ENCODE measurements at regions of chr1 and their contacts with region 1.

Region 1: GRCh38 chr1:180154325-180155181 is at the start of gene QSOX1:
- DNase-seq: peak; percentile 91 to 100 (median 99)
- ATAC-seq: peak; percentile 91
- H3K4me3 ChIP-seq: peak within 1 kb of the TSS; percentile 77
- H3K27ac ChIP-seq: peak within 1 kb of the TSS; percentile 77
- H3K4me1 ChIP-seq: peaks cover 33 to 37% of the 10 kb centered on the region in 2 experiments
- H3K27me3 ChIP-seq: no peaks in the 10 kb centered on the region
- CTCF ChIP-seq: peak in 2 of 3 experiments; percentile 10 to 48; a peak in 1 of 6 replicates
- EP300 ChIP-seq: peak; percentile 63; the same call in 1 of the 2 replicates
- POLR2A ChIP-seq: peak; percentile 85
- RAD21 ChIP-seq: no peak
- polyA plus RNA-seq, gene QSOX1: 4.0 to 4.6 TPM

Region 2: DNA sequence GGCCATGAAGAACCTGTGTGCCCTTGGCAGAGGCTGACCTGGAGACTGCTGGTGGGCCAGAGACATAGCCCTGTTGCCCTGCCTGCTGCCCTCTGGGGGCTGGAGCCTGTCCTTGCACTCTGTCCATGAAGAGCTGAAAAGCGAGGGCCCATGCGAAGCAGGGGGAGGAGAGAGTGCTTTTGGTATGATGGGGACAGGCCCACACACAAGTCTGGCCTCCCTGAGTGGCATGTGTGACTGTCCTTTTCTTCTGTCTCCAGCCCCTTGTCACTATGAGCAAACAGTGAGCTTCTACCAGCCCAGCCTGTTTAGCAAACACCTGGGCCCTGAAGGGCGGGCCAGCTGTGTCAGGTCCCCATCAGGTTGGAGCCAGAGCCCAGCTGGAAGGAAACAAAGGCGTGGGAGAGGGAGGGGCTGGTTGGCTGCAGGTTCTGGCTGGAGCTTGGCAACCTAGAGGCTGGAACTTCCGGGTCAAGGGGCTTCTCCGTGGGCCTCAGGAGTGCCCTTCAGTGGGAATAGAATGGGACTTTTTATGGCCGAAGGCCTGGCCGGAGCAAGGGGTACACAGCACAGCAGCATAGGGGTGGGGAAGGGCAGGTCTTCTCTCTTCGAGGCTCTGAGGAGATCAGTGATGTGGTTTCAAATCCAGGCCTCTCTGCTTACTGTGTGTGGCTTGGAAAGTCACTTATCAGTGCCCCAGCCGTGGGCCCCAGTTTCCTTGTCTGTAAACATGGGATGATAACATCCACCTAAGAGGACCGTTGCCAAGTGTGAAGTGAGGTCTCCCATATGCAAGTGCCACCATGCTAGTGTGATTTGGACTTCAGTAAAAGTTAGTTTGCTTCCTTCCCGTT is 14.5 kb after region 1 on chr1:
- CTCF ChIA-PET with region 1: no interaction called
- POLR2A ChIA-PET with region 1: interaction called, 41 read pairs
- in situ Hi-C with region 1: no loop called
- intact Hi-C with region 1: no loop called
- DNase-seq: peak; percentile 70 to 78 (median 75)
- ATAC-seq: peak; percentile 93
- H3K4me3 ChIP-seq: no peak overlapping the region
- H3K27ac ChIP-seq: no peak overlapping the region
- H3K4me1 ChIP-seq: peaks cover 10 to 19% of the 10 kb centered on the region in 2 experiments; a peak in 4 of 5 replicates
- H3K27me3 ChIP-seq: no peaks in the 10 kb centered on the region
- CTCF ChIP-seq: peak; percentile 75 to 89 (median 83)
- EP300 ChIP-seq: no peak
- POLR2A ChIP-seq: no peak
- RAD21 ChIP-seq: peak; percentile 42 to 74

Region 3: DNA sequence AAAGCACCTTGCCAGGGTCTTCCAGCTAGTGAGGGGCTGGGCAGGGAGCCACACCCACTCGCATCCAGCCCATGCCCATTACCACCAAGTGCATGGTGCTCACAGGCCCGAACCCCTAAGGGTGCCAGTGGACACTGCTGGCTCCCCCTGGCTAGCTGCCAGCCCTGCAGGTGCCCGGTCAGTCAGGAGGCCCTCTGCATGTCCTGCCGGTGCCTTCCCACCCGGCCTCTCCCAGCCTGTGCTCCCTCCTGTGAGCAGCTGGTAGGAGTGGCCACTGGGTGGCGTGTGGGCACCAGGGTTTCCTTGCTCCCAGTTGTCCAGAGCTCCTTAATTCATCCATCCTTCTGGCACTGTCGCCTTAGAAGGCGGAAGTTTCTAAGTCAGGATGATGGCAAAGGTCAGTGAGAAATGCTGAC is 33.5 kb after region 1 on chr1:
- CTCF ChIA-PET with region 1: no interaction called
- POLR2A ChIA-PET with region 1: no interaction called
- in situ Hi-C with region 1: no loop called
- intact Hi-C with region 1: no loop called
- DNase-seq: peak; percentile 68 to 77 (median 74)
- ATAC-seq: peak; percentile 90
- H3K4me3 ChIP-seq: no peak overlapping the region
- H3K27ac ChIP-seq: no peak overlapping the region
- H3K4me1 ChIP-seq: peaks cover 0 to 16% of the 10 kb centered on the region in 2 experiments; a peak in 3 of 5 replicates
- H3K27me3 ChIP-seq: no peaks in the 10 kb centered on the region
- CTCF ChIP-seq: peak; percentile 81 to 91 (median 84)
- EP300 ChIP-seq: no peak
- POLR2A ChIP-seq: no peak
- RAD21 ChIP-seq: peak; percentile 63 to 82

Measured in K562 (cell line).